Activated CD8-positive, alpha-beta T cell treated with anti-CD3 and anti-CD28 coated beads, Interleukin-2, amount 10 ng/mL, durations not matched to agents 7 days and 5 days (primary cell): ENCODE measurements at regions of chr18 and their contacts with region 1.

Region 1: DNA sequence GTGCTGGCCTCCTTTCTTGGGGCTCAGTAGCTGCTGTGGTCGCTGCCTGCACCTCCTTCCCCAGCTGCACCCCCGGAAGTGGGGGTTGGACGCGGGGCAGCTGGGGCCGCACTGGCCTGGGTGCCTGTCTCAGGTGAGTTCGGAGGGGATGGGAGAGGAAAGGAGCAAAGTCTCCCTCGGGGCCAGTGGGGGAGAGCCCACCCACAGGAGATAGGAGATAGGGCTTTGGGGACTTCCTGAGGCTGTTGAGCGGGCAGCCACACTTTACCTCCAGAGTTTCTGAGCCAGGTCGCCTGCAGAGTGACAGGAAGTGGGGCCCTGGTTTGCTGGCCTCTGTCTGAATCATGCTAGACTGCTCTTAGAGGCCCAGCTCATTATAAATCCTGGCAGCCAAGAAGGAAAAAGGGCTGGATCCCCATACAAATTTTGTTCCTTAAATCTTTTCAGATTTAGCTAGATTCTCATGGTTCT is 8.1 kb downstream of the MBP start:
- DNase-seq: peak; percentile 80
- ATAC-seq: peak; percentile 86
- H3K4me3 Mint-ChIP-seq: peak overlapping the region; percentile 72
- H3K27ac Mint-ChIP-seq: peak overlapping the region; percentile 89
- H3K4me1 Mint-ChIP-seq: peaks cover 91% of the 10 kb centered on the region
- H3K27me3 Mint-ChIP-seq: no peaks in the 10 kb centered on the region

Region 2: GRCh38 chr18:77061946-77062517 is 62.5 kb before region 1 on chr18:
- CTCF ChIA-PET with region 1: interaction called, 19 read pairs
- POLR2A ChIA-PET with region 1: interaction called, 101 read pairs
- DNase-seq: peak; percentile 58
- ATAC-seq: peak; percentile 45
- H3K4me3 Mint-ChIP-seq: peak overlapping the region; percentile 72
- H3K27ac Mint-ChIP-seq: peak overlapping the region; percentile 99
- H3K4me1 Mint-ChIP-seq: peaks cover 88% of the 10 kb centered on the region
- H3K27me3 Mint-ChIP-seq: no peaks in the 10 kb centered on the region

Region 3: GRCh38 chr18:77067291-77068061 is 57.0 kb before region 1 on chr18:
- CTCF ChIA-PET with region 1: interaction called, 19 read pairs
- POLR2A ChIA-PET with region 1: interaction called, 101 read pairs
- DNase-seq: peak; percentile 80
- ATAC-seq: peak; percentile 72
- H3K4me3 Mint-ChIP-seq: peak overlapping the region; percentile 61
- H3K27ac Mint-ChIP-seq: peak overlapping the region; percentile 95
- H3K4me1 Mint-ChIP-seq: peaks cover 99% of the 10 kb centered on the region
- H3K27me3 Mint-ChIP-seq: no peaks in the 10 kb centered on the region

Region 4: GRCh38 chr18:77101410-77102258 is 22.9 kb before region 1 on chr18:
- CTCF ChIA-PET with region 1: interaction called, 29 read pairs
- POLR2A ChIA-PET with region 1: interaction called, 36 read pairs
- DNase-seq: peak; percentile 48
- ATAC-seq: peak; percentile 56
- H3K4me3 Mint-ChIP-seq: peak overlapping the region; percentile 71
- H3K27ac Mint-ChIP-seq: peak overlapping the region; percentile 96
- H3K4me1 Mint-ChIP-seq: peaks cover 93% of the 10 kb centered on the region
- H3K27me3 Mint-ChIP-seq: no peaks in the 10 kb centered on the region

Region 5: DNA sequence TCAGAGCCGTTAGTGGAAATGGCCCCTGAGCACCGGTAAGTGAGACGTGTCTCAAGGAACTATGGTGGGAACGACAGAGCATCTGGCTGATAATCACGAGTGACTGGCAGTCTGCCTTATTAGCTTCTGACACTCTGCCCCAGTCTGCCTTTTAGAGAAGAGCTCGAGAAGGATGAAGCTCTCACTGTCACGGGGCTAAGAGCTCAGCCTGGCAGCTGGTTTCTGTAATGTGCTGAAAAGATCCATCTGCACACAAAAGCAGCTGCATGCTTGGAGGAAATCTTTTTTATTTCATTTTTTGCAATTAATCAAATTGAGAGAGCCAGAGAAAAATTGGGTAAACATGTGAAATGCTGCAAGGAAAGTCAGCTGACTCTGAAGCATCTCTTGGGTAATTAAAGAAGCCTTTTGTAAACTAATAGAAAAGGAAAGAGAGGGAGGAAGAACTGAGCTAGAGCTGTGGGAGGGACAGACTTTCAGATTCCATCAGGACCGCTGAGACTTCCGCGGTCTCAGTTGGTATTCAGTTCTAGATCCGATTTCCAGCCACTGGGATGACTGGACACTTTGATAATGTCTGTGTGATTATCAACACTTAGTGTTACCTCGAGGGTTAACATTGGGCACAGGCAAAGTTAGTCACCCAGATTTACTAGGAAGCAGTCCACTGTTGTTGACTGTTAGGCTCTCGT is 16.3 kb before region 1 on chr18:
- CTCF ChIA-PET with region 1: interaction called, 29 read pairs
- POLR2A ChIA-PET with region 1: interaction called, 16 read pairs
- DNase-seq: no peak
- ATAC-seq: peak; percentile 7
- H3K4me3 Mint-ChIP-seq: peak overlapping the region; percentile 41
- H3K27ac Mint-ChIP-seq: peak overlapping the region; percentile 73
- H3K4me1 Mint-ChIP-seq: peaks cover 91% of the 10 kb centered on the region
- H3K27me3 Mint-ChIP-seq: no peaks in the 10 kb centered on the region